GM23248 (cell line): ENCODE measurements at regions of chr4 and their contacts with region 1.

Region 1: DNA sequence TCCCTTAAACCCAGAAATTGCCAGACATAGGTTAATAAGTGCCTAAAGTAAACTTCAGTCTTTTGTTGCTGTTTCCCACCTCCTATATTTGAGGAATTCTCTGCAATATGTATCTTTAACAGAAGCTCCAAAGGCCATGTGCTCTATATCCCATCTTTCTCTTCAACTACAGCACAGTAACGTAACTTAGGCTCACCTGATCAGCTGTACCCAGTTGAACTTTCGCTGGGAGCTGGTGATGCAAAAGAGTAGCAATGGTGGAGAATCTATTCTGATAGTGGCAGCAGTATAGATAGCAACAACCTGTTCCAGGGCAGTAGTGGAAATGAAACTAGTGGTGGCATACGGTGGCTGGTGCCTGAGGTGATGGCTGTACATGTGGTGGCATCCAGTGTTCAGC is 33.2 kb upstream of the YTHDC1 start:
- DNase-seq: no peak
- H3K4me3 ChIP-seq: no peak overlapping the region
- H3K27ac ChIP-seq: no peak overlapping the region
- H3K4me1 ChIP-seq: no peaks in the 10 kb centered on the region
- H3K27me3 ChIP-seq: peaks cover 37% of the 10 kb centered on the region; the same call in 1 of the 2 replicates

Region 2: GRCh38 chr4:68271851-68272756 is 111.0 kb before region 1 on chr4:
- in situ Hi-C with region 1: loop called (anchors 10 kb)
- DNase-seq: peak; percentile 71
- H3K4me3 ChIP-seq: peak overlapping the region; percentile 74
- H3K27ac ChIP-seq: peak overlapping the region; percentile 41
- H3K4me1 ChIP-seq: peaks cover 28% of the 10 kb centered on the region
- H3K27me3 ChIP-seq: no peaks in the 10 kb centered on the region

Region 3: DNA sequence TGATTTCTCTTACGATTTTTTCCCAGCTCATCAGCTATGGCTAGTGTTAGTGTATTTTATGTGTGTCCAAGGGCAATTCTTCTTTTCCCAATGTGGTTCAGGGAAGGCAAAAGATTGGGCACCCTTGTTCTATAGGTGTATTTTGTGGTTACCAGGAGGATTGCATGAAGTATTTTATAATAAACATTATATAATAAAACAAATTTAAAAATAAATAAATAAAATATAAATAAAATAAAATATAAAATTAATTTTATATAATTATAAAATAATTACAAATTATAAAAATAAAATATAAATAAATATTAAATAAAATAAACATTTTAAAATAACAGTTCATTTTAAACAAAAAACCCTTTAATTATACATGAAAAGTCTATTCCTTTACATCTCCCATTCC is 397.1 kb after region 1 on chr4:
- in situ Hi-C with region 1: no loop called
- DNase-seq: no peak
- H3K4me3 ChIP-seq: no peak overlapping the region
- H3K27ac ChIP-seq: no peak overlapping the region
- H3K4me1 ChIP-seq: no peaks in the 10 kb centered on the region
- H3K27me3 ChIP-seq: no peaks in the 10 kb centered on the region